Posterior cingulate gyrus (tissue), 11 donors: ENCODE measurements at regions of chr7 and their contacts with region 1.

Region 1: DNA sequence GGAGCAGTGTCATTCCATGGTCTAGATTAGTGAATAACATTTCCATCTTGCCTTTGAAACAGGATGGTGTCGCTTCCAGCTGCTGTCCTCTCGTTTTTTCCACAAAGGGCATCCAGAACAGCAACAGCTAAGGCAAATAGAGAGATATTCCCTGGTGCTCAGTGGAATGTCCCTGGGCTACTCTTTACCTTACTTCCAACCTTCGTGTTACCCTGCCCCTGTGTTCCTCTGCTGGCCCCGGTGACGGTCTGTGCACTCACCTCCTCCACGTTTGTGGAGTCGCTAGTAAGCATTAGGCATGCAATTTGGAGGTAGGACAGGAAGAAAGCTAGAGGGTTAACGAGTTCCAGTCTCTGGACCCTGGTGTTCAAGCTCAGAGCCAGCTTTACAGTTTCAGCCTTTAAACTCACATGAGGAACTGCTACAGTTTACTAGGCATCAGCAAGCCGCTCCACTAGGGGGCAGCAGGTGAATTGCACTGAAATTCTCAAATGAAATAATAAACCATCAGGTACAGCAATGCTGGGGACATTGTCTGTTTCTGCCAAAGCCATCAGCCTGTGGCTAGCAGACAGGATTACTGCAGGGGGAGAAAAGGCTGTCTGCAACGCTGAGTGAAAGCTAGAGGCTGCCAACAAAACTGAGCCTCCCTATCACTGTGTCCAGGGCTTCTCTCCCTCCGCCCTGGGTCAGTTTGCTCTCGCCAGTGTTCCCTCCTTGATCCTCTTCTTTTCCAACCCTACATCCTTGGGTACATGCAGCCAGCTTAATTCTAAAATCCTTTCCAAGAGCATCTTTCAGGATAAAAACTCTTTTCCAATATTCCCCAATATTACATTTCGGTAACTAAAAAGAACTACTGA is 9.0 kb downstream of the MRPL32 start:
- DNase-seq: peak; percentile 70 to 96 (median 86)

Region 2: GRCh38 chr7:43108255-43109011 is 167.2 kb after region 1 on chr7:
- intact Hi-C with region 1: loop called (anchors 5 kb)
- DNase-seq: peak; percentile 41 to 94 (median 66)

Region 3: GRCh38 chr7:43260980-43261878 is 320.0 kb after region 1 on chr7:
- intact Hi-C with region 1: loop called (anchors 1 kb)
- DNase-seq: peak in 9 of 10 donors; percentile 43 to 93 (median 68)

Region 4: DNA sequence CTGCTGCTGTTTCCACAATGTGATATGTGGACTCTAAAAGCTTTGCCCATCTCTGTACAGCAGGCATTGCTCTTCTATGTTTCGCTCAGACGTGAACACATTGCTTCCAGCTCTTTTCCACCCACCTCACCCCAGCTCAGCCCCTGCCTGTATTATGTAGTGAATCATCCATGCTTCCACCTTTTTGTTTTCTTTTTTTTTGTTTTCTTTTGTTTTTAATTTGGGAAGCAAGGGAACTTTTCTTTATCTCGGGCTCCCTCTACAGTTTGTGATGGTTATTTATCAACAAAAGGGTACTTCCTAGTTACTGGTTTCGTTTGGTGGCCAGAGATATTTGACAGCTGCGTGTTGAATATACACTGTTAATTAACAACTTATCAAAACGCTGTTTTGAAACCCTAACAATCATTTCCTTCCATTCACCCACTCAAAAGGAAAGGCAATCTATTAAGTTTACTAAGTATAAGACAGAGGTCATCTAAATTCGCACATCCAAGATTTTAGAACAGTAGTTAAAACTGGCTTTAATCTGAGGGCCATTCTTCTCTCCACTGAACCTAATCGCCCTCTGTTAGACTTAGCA is 513.8 kb after region 1 on chr7:
- intact Hi-C with region 1: loop called (anchors 5 kb)
- DNase-seq: no peak